ENCODE measurements at regions of chr14 and their contacts with region 1.

Region 1: DNA sequence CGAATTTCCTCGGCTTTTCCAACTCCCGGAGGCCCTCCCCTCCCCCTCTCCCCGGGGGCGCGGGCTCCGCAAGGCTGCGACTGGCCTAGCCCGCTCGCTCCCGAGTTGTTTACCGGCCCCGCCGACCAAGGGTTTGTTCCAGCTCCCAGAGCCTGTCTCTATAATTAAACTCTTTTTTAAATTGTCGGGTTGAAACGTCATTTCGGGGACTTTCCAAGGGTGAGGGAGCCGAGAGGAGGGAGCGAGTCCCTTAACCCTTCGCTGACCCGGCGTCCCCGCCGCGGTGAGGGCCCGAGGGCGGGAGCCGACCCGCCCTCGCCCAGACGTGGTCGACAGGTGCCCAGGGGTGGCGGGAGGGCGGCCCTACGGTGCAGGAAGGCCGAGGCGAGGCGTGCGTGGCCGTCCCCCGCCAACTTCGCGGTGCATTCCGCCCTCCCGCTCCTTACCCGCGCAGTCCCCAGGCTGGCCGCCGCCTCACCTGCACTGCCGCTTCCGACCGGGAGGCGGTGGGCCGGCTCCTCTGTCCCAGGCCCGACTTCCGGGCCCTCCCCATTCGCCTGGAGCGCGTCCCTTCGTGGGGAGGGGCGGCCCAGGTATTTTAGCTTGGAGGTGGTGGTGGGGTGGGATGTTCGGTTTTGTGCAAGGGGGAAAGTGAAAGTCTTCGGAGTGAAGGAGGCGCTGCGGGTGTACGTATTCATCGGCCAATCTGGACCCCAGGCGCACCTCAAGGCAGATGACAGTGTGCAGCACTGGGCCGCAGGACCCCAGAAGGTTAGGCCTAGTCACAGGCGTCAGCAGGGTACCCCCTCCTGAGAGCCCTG is 2.9 kb upstream of the ZFP36L1 start:
- DNase-seq: peak; percentile 88 to 93 (median 89)
- H3K4me3 ChIP-seq: peak overlapping the region; percentile 88 to 98
- H3K4me3 Mint-ChIP-seq: peak overlapping the region; percentile 88 to 100 (median 94)
- H3K27ac ChIP-seq: peak overlapping the region; percentile 99
- H3K27ac Mint-ChIP-seq: peak overlapping the region; percentile 98 to 100 (median 99)
- H3K4me1 ChIP-seq: peaks cover 20% of the 10 kb centered on the region
- H3K4me1 Mint-ChIP-seq: peaks cover 22 to 71% (median 29%) of the 10 kb centered on the region in 4 donors
- H3K27me3 ChIP-seq: no peaks in the 10 kb centered on the region
- H3K27me3 Mint-ChIP-seq: peaks cover 0 to 8% of the 10 kb centered on the region in 2 donors

Region 2: GRCh38 chr14:68210729-68211299 is 585.0 kb before region 1 on chr14:
- CTCF ChIA-PET with region 1: no interaction called
- POLR2A ChIA-PET with region 1: interaction called, 10 read pairs
- intact Hi-C with region 1: no loop called
- DNase-seq: peak; percentile 55 to 78 (median 74)
- H3K4me3 ChIP-seq: peak overlapping the region; percentile 8 to 29
- H3K4me3 Mint-ChIP-seq: peak overlapping the region; percentile 74 to 92 (median 85)
- H3K27ac ChIP-seq: peak overlapping the region; percentile 31
- H3K27ac Mint-ChIP-seq: peak overlapping the region; percentile 91 to 98 (median 94)
- H3K4me1 ChIP-seq: peaks cover 53% of the 10 kb centered on the region
- H3K4me1 Mint-ChIP-seq: peaks cover 35 to 68% (median 52%) of the 10 kb centered on the region in 4 donors
- H3K27me3 ChIP-seq: no peaks in the 10 kb centered on the region
- H3K27me3 Mint-ChIP-seq: no peaks in the 10 kb centered on the region

Region 3: DNA sequence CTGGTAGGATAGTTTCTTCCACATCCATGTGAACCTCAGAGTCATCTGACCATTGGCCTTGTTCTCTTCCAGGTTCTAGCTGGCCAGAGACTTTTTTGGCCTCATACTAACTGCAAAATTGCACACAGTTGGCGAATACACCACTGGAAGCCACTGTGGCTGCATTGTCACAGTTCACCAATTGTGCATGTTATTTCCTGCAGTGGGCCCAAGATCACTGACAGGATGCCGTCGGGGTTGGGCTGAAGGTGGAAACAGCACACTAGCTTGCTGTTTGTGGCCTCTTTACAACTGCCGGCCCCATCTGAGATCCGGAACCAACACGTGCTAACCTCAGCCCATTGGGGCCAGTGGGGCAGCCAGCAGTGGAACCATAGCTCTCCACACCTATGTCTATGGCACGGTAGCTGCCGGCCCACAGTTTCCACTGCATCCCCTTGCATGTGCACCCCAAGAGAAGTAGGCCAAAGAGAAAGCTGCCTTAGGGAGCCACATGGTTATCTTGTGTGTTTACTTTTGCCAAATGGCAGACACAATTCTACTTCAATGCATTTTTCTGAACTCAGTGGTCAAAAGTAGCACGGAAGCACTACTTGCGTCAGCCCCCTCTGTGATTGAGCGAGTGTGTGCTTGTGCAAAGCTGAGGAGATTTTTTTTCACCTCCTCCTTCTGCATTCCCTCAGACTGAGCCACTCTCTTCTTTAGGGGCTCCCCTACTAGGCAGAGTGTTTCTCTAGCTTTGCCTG is 512.3 kb before region 1 on chr14:
- CTCF ChIA-PET with region 1: interaction called, 65 read pairs
- POLR2A ChIA-PET with region 1: interaction called, 207 read pairs
- intact Hi-C with region 1: no loop called
- DNase-seq: peak; percentile 47 to 77 (median 68)
- H3K4me3 ChIP-seq: peak overlapping the region in 1 of 2 donors; percentile 1
- H3K4me3 Mint-ChIP-seq: peak overlapping the region in 7 of 8 donors; percentile 44 to 81 (median 75)
- H3K27ac ChIP-seq: peak overlapping the region; percentile 73
- H3K27ac Mint-ChIP-seq: peak overlapping the region; percentile 94 to 99 (median 95)
- H3K4me1 ChIP-seq: peaks cover 74% of the 10 kb centered on the region
- H3K4me1 Mint-ChIP-seq: peaks cover 60 to 90% (median 73%) of the 10 kb centered on the region in 4 donors
- H3K27me3 ChIP-seq: no peaks in the 10 kb centered on the region
- H3K27me3 Mint-ChIP-seq: no peaks in the 10 kb centered on the region

Region 4: GRCh38 chr14:68506021-68506644 is 289.7 kb before region 1 on chr14:
- CTCF ChIA-PET with region 1: interaction called, 4 read pairs
- POLR2A ChIA-PET with region 1: interaction called, 235 read pairs
- intact Hi-C with region 1: no loop called
- DNase-seq: peak in 2 of 5 donors; percentile 9 to 39
- H3K4me3 ChIP-seq: peak overlapping the region; percentile 15 to 28
- H3K4me3 Mint-ChIP-seq: peak overlapping the region; percentile 63 to 86 (median 74)
- H3K27ac ChIP-seq: peak overlapping the region; percentile 27
- H3K27ac Mint-ChIP-seq: peak overlapping the region; percentile 60 to 93 (median 89)
- H3K4me1 ChIP-seq: peaks cover 45% of the 10 kb centered on the region
- H3K4me1 Mint-ChIP-seq: peaks cover 40 to 63% (median 52%) of the 10 kb centered on the region in 4 donors
- H3K27me3 ChIP-seq: no peaks in the 10 kb centered on the region
- H3K27me3 Mint-ChIP-seq: no peaks in the 10 kb centered on the region

Region 5: GRCh38 chr14:68655911-68656360 is 139.9 kb before region 1 on chr14:
- CTCF ChIA-PET with region 1: no interaction called
- POLR2A ChIA-PET with region 1: no interaction called
- intact Hi-C with region 1: no loop called
- DNase-seq: no peak
- H3K4me3 ChIP-seq: no peak overlapping the region
- H3K4me3 Mint-ChIP-seq: no peak overlapping the region
- H3K27ac ChIP-seq: no peak overlapping the region
- H3K27ac Mint-ChIP-seq: no peak overlapping the region
- H3K4me1 ChIP-seq: peaks cover 3% of the 10 kb centered on the region
- H3K4me1 Mint-ChIP-seq: peaks cover 0 to 16% (median 2%) of the 10 kb centered on the region in 4 donors
- H3K27me3 ChIP-seq: no peaks in the 10 kb centered on the region
- H3K27me3 Mint-ChIP-seq: no peaks in the 10 kb centered on the region

Region 6: DNA sequence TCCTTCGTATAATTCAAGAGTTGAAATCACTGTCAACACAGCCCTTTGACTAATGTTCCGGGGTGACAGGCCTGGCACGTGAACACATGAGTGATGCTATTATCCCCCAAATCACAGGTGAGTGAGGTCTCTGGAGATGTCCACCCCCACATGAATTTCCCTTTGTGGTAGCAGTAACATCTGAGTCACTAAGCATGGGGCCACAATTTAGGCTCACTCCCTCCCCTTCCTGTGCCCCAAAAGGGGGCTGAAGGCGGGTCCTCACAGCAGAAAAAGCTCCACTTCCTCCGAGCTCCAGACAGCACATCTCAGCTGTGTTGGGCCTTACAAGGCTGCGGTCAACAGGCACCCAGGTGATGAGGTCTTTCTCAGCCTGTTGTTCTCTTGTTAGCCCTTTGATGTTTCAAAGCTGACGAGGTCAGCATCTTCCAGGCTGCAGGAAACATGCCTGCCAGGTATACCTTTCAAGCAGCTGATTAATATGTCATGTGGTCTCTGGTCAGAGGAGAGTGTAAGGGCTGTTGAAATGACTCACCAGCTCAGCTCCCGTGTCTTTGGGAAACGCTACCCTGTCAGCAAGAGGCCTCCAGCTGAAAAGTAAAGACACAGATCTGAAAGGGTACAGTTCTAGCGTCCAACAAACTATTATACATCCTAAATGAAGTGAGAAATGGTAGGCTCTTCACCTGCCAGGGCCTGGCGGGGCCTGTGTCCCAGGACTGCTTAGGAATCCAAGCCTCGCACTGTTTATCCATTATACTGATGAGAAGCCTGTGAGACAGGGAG is 110.2 kb before region 1 on chr14:
- CTCF ChIA-PET with region 1: interaction called, 68 read pairs
- POLR2A ChIA-PET with region 1: interaction called, 581 read pairs
- intact Hi-C with region 1: loop called (anchors 1 kb)
- DNase-seq: peak; percentile 84 to 97 (median 89)
- H3K4me3 ChIP-seq: peak overlapping the region in 1 of 2 donors; percentile 11
- H3K4me3 Mint-ChIP-seq: peak overlapping the region; percentile 49 to 85 (median 70)
- H3K27ac ChIP-seq: peak overlapping the region; percentile 70
- H3K27ac Mint-ChIP-seq: peak overlapping the region; percentile 93 to 98 (median 97)
- H3K4me1 ChIP-seq: peaks cover 58% of the 10 kb centered on the region
- H3K4me1 Mint-ChIP-seq: peaks cover 48 to 66% (median 60%) of the 10 kb centered on the region in 4 donors
- H3K27me3 ChIP-seq: no peaks in the 10 kb centered on the region
- H3K27me3 Mint-ChIP-seq: no peaks in the 10 kb centered on the region

Region 7: GRCh38 chr14:68775143-68776126 is 20.4 kb before region 1 on chr14:
- CTCF ChIA-PET with region 1: interaction called, 62 read pairs
- POLR2A ChIA-PET with region 1: interaction called, 1,973 read pairs
- intact Hi-C with region 1: no loop called
- DNase-seq: no peak
- H3K4me3 ChIP-seq: no peak overlapping the region
- H3K4me3 Mint-ChIP-seq: peak overlapping the region in 2 of 8 donors; percentile 11 to 20
- H3K27ac ChIP-seq: no peak overlapping the region
- H3K27ac Mint-ChIP-seq: peak overlapping the region in 5 of 7 donors; percentile 29 to 84 (median 57)
- H3K4me1 ChIP-seq: peaks cover 90% of the 10 kb centered on the region
- H3K4me1 Mint-ChIP-seq: peaks cover 62 to 98% (median 77%) of the 10 kb centered on the region in 4 donors
- H3K27me3 ChIP-seq: no peaks in the 10 kb centered on the region
- H3K27me3 Mint-ChIP-seq: no peaks in the 10 kb centered on the region

Region 8: DNA sequence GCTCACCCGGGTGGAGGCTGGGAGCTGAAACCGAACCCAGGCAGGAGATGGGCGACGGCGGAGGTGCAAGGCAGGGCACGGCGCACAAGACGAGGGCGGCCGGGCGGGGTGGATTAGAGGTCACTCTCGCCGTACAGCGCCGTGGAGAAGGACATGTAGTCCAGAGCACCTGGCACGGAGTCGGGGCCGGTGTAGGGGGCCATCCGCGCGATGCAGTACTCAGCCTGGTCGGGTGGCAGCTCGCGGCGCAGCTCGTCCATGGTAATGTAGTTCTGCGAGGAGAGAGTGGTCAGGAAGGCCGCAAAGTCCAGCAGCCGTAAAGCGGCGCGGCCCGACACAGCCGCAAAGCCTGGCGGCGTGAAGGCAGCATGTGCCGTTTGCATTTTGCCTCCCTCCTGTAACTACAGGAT is 78.9 kb after region 1 on chr14:
- CTCF ChIA-PET with region 1: no interaction called
- POLR2A ChIA-PET with region 1: no interaction called
- intact Hi-C with region 1: no loop called
- DNase-seq: no peak
- H3K4me3 ChIP-seq: no peak overlapping the region
- H3K4me3 Mint-ChIP-seq: peak overlapping the region in 3 of 8 donors; percentile 15 to 51 (median 44)
- H3K27ac ChIP-seq: no peak overlapping the region
- H3K27ac Mint-ChIP-seq: peak overlapping the region in 1 of 7 donors; percentile 31
- H3K4me1 ChIP-seq: no peaks in the 10 kb centered on the region
- H3K4me1 Mint-ChIP-seq: no peaks in the 10 kb centered on the region
- H3K27me3 ChIP-seq: no peaks in the 10 kb centered on the region
- H3K27me3 Mint-ChIP-seq: no peaks in the 10 kb centered on the region

Region 9: DNA sequence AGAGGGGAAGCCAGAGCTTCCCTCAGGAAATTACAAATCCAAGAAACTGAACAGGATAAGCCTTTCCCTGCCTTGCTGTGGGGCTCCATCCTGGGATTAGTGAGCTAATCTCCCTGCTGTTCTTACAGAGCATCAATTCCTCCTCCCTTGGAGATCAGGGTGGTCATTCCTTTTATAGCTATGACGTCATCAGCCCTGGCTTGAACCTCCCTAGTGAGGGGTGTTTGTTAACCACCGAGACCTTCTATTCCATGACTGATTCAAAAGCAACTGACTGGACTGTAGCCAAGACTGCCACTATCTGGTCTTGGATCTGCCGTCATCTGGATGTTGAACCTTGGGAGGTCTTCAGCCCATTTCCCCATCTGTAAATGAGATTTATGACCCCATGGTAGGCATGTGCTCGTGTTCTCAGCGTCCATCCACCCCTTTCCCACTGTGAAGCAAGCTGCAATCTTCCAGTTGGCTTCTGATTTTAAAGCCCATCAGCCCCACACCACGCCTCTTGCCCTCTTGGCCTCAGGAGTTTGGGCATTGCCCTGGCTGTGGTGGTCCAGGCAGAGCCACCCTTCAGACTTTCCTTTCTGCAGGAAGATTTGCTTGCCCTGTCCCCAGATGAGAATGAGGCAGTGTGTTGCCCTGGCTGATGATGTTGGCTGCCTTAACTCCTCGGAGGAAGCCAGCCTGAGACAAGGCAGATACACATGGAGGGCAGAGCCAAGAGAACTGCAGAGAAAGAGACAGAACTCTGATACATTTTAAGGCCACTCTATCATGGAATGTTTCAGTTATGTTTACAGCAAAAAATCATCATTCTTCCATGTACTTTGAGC is 242.9 kb after region 1 on chr14:
- CTCF ChIA-PET with region 1: no interaction called
- POLR2A ChIA-PET with region 1: no interaction called
- intact Hi-C with region 1: no loop called
- DNase-seq: no peak
- H3K4me3 ChIP-seq: no peak overlapping the region
- H3K4me3 Mint-ChIP-seq: no peak overlapping the region
- H3K27ac ChIP-seq: no peak overlapping the region
- H3K27ac Mint-ChIP-seq: no peak overlapping the region
- H3K4me1 ChIP-seq: no peaks in the 10 kb centered on the region
- H3K4me1 Mint-ChIP-seq: peaks cover 0 to 13% (median 8%) of the 10 kb centered on the region in 4 donors
- H3K27me3 ChIP-seq: no peaks in the 10 kb centered on the region
- H3K27me3 Mint-ChIP-seq: peaks cover 11 to 18% of the 10 kb centered on the region in 2 donors

Region 10: GRCh38 chr14:69611201-69612011 is 815.6 kb after region 1 on chr14 and contains the start of gene SUSD6:
- CTCF ChIA-PET with region 1: no interaction called
- POLR2A ChIA-PET with region 1: no interaction called
- intact Hi-C with region 1: loop called (anchors 5 kb)
- DNase-seq: peak; percentile 85 to 91 (median 87)
- H3K4me3 ChIP-seq: peak within 1 kb of the TSS; percentile 80 to 84
- H3K4me3 Mint-ChIP-seq: peak within 1 kb of the TSS; percentile 91 to 99 (median 97)
- H3K27ac ChIP-seq: peak within 1 kb of the TSS; percentile 83
- H3K27ac Mint-ChIP-seq: peak within 1 kb of the TSS; percentile 96 to 100 (median 100)
- H3K4me1 ChIP-seq: peaks cover 56% of the 10 kb centered on the region
- H3K4me1 Mint-ChIP-seq: peaks cover 40 to 64% (median 53%) of the 10 kb centered on the region in 4 donors
- H3K27me3 ChIP-seq: no peaks in the 10 kb centered on the region
- H3K27me3 Mint-ChIP-seq: no peaks in the 10 kb centered on the region
- total RNA-seq, gene SUSD6: 61.5 to 62.0 TPM